ENCODE measurements at regions of chr10 and their contacts with region 1.

Region 1: DNA sequence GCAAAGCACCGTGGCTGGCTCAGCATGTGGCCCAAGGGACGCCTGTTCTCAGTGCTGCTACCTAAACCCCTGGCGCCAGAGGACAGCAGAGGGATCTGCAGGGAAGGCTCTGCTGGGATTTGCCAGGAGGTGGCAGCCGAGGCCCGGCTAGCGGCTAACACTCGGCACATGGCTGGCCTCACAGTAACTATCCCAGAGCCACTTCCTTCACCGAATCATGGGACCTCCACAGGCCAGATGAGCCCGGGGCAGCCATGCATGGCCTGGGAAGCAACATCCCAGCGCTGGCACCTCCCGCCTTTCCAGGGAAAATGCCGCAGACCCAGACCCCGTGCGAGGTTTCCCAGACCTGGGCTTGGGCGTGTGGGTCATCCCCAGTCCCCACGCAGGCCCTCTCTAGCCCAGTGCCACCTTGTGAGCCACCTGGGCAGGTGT is 36.4 kb downstream of the DPYSL4 start:
- DNase-seq: peak; percentile 87
- ATAC-seq: peak; percentile 97

Region 2: GRCh38 chr10:132351611-132352010 is 128.4 kb after region 1 on chr10:
- intact Hi-C with region 1: loop called (anchors 2 kb)
- DNase-seq: no peak
- ATAC-seq: no peak

Region 3: GRCh38 chr10:132452631-132453469 is 229.7 kb after region 1 on chr10:
- intact Hi-C with region 1: loop called (anchors 5 kb)
- DNase-seq: peak; percentile 90
- ATAC-seq: peak; percentile 89